ENCODE measurements at regions of chr6 and their contacts with region 1.

Region 1: GRCh38 chr6:1604158-1605030 is 5.3 kb upstream of the FOXC1 start:
- DNase-seq: peak; percentile 60 to 61
- H3K4me3 ChIP-seq: peak overlapping the region in 2 of 3 donors; percentile 15
- H3K27ac ChIP-seq: no peak overlapping the region
- H3K4me1 ChIP-seq: peaks cover 17 to 35% of the 10 kb centered on the region in 2 donors
- H3K27me3 ChIP-seq: peaks cover 51% of the 10 kb centered on the region
- CTCF ChIP-seq: peak; percentile 36 to 98 (median 94)
- POLR2A ChIP-seq: no peak

Region 2: GRCh38 chr6:1558388-1558787 is 46.0 kb before region 1 on chr6:
- intact Hi-C with region 1: no loop called
- DNase-seq: no peak
- H3K4me3 ChIP-seq: no peak overlapping the region
- H3K27ac ChIP-seq: no peak overlapping the region
- H3K4me1 ChIP-seq: peaks cover 0 to 3% of the 10 kb centered on the region in 2 donors
- H3K27me3 ChIP-seq: no peaks in the 10 kb centered on the region
- CTCF ChIP-seq: no peak
- POLR2A ChIP-seq: no peak

Region 3: DNA sequence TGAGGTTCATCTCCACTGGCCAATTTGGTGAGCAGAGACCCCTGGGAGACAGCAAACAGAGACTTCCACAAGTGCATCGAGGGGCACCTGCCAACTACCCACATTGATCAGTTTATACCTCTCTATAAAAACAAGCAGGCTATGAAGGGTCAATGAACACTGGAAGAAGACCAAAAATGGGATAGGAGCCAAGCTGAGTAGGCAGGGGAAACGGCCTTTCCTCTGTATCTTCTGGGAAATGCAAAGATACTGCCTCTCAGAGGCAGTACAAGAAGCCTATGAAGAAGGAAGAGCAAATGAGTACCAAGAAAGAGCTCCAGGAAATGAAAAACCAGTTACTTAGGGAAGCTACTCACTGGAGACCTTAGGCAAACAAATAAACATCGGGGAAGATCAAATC is 393.3 kb after region 1 on chr6:
- intact Hi-C with region 1: no loop called
- DNase-seq: no peak
- H3K4me3 ChIP-seq: no peak overlapping the region
- H3K27ac ChIP-seq: no peak overlapping the region
- H3K4me1 ChIP-seq: no peaks in the 10 kb centered on the region
- H3K27me3 ChIP-seq: no peaks in the 10 kb centered on the region
- CTCF ChIP-seq: no peak
- POLR2A ChIP-seq: no peak

Region 4: DNA sequence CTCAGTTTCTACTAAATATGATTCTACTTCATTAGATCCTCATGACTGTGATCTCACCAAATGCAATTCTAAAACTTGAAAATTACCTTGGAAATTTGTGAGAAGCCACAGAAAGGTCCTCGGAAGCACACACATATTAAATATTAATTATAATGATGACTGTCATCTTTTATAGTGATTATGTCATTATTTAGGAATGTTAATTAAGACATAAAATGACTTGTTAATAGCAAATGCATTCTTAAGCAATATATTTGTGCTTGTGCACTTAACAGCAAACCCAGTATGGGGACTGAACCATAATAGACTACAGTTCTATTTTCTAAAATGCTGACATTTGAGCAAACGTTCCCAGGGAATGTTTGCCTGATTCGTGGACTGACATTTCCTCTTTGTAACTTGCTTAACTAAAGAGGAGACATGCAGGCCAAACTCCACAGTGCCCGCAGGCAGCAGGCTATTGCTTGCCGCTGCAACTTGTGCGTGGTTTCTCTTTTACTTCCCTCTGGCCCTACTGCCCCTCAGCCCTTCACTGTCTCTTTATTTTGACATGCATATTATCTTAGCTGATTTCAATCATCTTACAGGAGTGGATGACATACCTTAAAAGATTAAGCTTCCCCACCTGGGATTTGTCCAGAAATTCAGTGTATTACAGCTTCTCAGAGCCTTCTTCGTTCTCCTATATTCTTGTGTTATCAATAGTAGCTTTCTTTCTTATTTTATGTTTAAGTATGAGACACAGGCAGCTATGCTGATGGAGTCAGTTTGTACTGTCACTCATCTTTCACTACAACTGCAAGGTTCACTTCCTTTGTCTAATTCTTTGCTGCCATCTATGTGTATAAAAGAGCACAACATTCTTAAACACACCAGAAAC is 499.5 kb after region 1 on chr6:
- intact Hi-C with region 1: loop called (anchors 2 kb)
- DNase-seq: no peak
- H3K4me3 ChIP-seq: no peak overlapping the region
- H3K27ac ChIP-seq: no peak overlapping the region
- H3K4me1 ChIP-seq: no peaks in the 10 kb centered on the region
- H3K27me3 ChIP-seq: no peaks in the 10 kb centered on the region
- CTCF ChIP-seq: peak in 5 of 6 experiments; percentile 30 to 82 (median 64)
- POLR2A ChIP-seq: no peak

Region 5: GRCh38 chr6:2190661-2191389 is 586.4 kb after region 1 on chr6:
- intact Hi-C with region 1: loop called (anchors 5 kb)
- DNase-seq: no peak
- H3K4me3 ChIP-seq: no peak overlapping the region
- H3K27ac ChIP-seq: no peak overlapping the region
- H3K4me1 ChIP-seq: no peaks in the 10 kb centered on the region
- H3K27me3 ChIP-seq: no peaks in the 10 kb centered on the region
- CTCF ChIP-seq: no peak
- POLR2A ChIP-seq: no peak

Region 6: DNA sequence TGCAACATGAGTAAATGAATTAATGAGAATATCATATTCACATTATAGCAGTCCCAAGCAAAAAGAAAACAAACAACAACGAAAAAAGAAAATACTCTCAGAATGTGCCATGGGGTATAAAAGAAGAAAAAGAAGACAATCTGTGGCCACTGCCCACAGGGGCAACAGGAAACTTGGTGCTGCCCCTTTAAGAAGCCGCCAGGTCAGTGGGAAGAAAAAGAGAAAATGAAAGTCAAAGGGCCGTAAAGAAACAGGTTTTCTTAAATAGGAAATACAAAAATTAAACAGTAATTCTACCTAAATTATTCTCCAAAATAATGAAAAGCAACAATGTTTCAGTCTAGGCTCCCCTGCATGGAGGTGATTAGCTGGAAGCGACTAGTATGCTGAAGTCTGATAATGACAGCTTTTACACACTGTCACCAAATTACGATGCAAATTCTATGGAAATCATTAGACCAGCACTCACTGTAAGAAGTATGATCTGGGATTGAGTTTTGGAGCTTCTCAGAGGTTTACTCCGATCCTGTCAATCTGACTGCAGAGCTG is 617.4 kb after region 1 on chr6:
- intact Hi-C with region 1: no loop called
- DNase-seq: no peak
- H3K4me3 ChIP-seq: peak overlapping the region in 2 of 3 donors; percentile 17 to 20
- H3K27ac ChIP-seq: peak overlapping the region in 1 of 3 donors; percentile 29
- H3K4me1 ChIP-seq: peaks cover 0 to 10% of the 10 kb centered on the region in 2 donors
- H3K27me3 ChIP-seq: no peaks in the 10 kb centered on the region
- CTCF ChIP-seq: no peak
- POLR2A ChIP-seq: no peak

Measured in thyroid gland (tissue), 4 donors.